ENCODE measurements at regions of chr19 and their contacts with region 1.

Region 1: GRCh38 chr19:8615813-8616596 is 5.5 kb upstream of the ADAMTS10 start:
- DNase-seq: peak; percentile 68
- H3K4me3 ChIP-seq: no peak overlapping the region; a peak in 1 of 4 replicates
- H3K27ac ChIP-seq: no peak overlapping the region
- H3K4me1 ChIP-seq: no peaks in the 10 kb centered on the region; a peak in 2 of 4 replicates
- H3K27me3 ChIP-seq: peaks cover 47% of the 10 kb centered on the region; the same call in 1 of the 2 replicates
- CTCF ChIP-seq: peak; percentile 97
- EP300 ChIP-seq: no peak
- RAD21 ChIP-seq: peak; percentile 64

Region 2: GRCh38 chr19:8592231-8593009 is 23.6 kb before region 1 on chr19:
- CTCF ChIA-PET with region 1: interaction called, 22 read pairs
- POLR2A ChIA-PET with region 1: no interaction called
- DNase-seq: peak; percentile 98
- H3K4me3 ChIP-seq: peak overlapping the region; percentile 44 to 60
- H3K27ac ChIP-seq: peak overlapping the region in 1 of 2 experiments; percentile 48; a peak in 1 of 4 replicates
- H3K4me1 ChIP-seq: peaks cover 0 to 9% of the 10 kb centered on the region in 2 experiments; a peak in 1 of 4 replicates
- H3K27me3 ChIP-seq: no peaks in the 10 kb centered on the region
- CTCF ChIP-seq: no peak
- EP300 ChIP-seq: no peak
- RAD21 ChIP-seq: no peak

Region 3: DNA sequence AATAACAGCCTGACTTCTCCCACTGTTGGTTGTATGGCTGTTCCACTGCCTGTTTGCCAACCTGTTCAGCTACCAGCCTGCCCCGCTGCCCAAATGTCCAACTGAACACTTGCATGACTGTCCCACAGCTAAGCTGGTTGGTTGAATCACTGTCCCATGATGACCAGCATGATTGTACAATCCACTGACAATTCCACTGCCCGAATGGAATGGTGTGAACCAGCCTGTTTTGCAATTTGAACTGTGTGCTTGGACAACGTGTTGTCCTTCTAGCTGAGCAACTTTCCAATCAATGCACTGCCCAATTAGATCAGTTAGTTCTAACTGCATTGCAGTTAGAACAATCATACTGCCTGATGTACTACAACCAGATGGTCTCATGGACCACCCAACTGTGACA is 14.2 kb before region 1 on chr19:
- CTCF ChIA-PET with region 1: interaction called, 17 read pairs
- POLR2A ChIA-PET with region 1: no interaction called
- DNase-seq: no peak
- H3K4me3 ChIP-seq: no peak overlapping the region
- H3K27ac ChIP-seq: no peak overlapping the region
- H3K4me1 ChIP-seq: no peaks in the 10 kb centered on the region
- H3K27me3 ChIP-seq: no peaks in the 10 kb centered on the region
- CTCF ChIP-seq: no peak
- EP300 ChIP-seq: no peak
- RAD21 ChIP-seq: no peak